Lower leg skin (tissue), 4 donors: ENCODE measurements at regions of chr5 and their contacts with region 1.

Region 1: DNA sequence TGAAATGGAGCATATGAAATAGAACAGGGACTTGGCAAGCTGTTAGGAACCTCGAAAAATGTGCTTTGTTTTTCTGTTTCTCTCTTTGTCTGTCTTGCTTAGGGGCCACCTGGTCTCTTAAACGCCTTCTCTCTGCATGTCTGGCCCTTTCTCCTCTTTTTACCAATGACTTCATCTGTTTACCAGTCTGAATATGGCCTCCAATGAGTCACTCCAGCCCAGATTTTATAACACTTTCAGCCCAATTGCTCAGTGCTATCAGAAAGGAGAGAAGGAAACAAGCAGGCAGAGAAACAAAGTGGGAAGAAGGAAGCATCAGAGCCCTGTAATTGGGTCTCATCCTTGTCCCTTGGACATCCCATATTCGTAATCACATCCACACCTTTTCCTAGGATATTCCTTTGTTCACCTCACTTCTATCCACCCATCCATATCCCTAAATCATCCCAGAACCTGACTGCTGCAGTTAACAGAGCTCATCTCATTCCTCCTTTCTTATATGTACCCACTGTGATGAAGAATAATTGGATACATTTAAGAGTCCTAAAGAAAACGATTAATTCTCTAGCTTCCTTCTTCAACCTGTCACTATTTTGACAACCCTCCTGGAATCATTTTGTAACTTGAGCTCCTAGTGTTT is 151.8 kb upstream of the GPR151 start:
- DNase-seq: no peak
- H3K4me3 ChIP-seq: no peak overlapping the region
- CTCF ChIP-seq: no peak
- POLR2A ChIP-seq: no peak

Region 2: GRCh38 chr5:145433088-145433487 is 1234.7 kb before region 1 on chr5:
- intact Hi-C with region 1: no loop called
- DNase-seq: no peak
- H3K4me3 ChIP-seq: no peak overlapping the region
- CTCF ChIP-seq: no peak
- POLR2A ChIP-seq: no peak

Region 3: GRCh38 chr5:146553435-146553834 is 114.3 kb before region 1 on chr5:
- intact Hi-C with region 1: no loop called
- DNase-seq: no peak
- H3K4me3 ChIP-seq: no peak overlapping the region
- CTCF ChIP-seq: no peak
- POLR2A ChIP-seq: no peak

Region 4: GRCh38 chr5:146565764-146566367 is 101.9 kb before region 1 on chr5:
- intact Hi-C with region 1: no loop called
- DNase-seq: no peak
- H3K4me3 ChIP-seq: no peak overlapping the region
- CTCF ChIP-seq: no peak
- POLR2A ChIP-seq: no peak

Region 5: GRCh38 chr5:146620669-146621051 is 47.1 kb before region 1 on chr5:
- intact Hi-C with region 1: loop called (anchors 1 kb)
- DNase-seq: no peak
- H3K4me3 ChIP-seq: no peak overlapping the region
- CTCF ChIP-seq: no peak
- POLR2A ChIP-seq: no peak